Sigmoid colon (tissue), 7 donors: ENCODE measurements at regions of chr5 and their contacts with region 1.

Region 1: GRCh38 chr5:111158105-111158744 is 66.0 kb upstream of the CAMK4 start:
- DNase-seq: peak; percentile 78
- H3K4me3 ChIP-seq: no peak overlapping the region
- H3K27ac ChIP-seq: no peak overlapping the region
- H3K4me1 ChIP-seq: no peaks in the 10 kb centered on the region
- H3K27me3 ChIP-seq: no peaks in the 10 kb centered on the region
- CTCF ChIP-seq: peak; percentile 77 to 99 (median 94)
- EP300 ChIP-seq: no peak
- POLR2A ChIP-seq: no peak

Region 2: GRCh38 chr5:111278845-111279504 is 120.8 kb after region 1 on chr5:
- intact Hi-C with region 1: loop called (anchors 1 kb)
- DNase-seq: no peak
- H3K4me3 ChIP-seq: no peak overlapping the region
- H3K27ac ChIP-seq: no peak overlapping the region
- H3K4me1 ChIP-seq: no peaks in the 10 kb centered on the region
- H3K27me3 ChIP-seq: no peaks in the 10 kb centered on the region
- CTCF ChIP-seq: peak in 3 of 4 experiments; percentile 31 to 59 (median 48)
- EP300 ChIP-seq: no peak
- POLR2A ChIP-seq: no peak